ENCODE measurements at regions of chr19 and their contacts with region 1.

Region 1: GRCh38 chr19:4638828-4639530 is at the start of gene TNFAIP8L1:
- DNase-seq: peak; percentile 96
- H3K4me3 Mint-ChIP-seq: peak within 1 kb of the TSS; percentile 100
- H3K27ac Mint-ChIP-seq: peak within 1 kb of the TSS; percentile 98
- H3K4me1 Mint-ChIP-seq: peaks cover 27% of the 10 kb centered on the region
- H3K27me3 Mint-ChIP-seq: no peaks in the 10 kb centered on the region
- total RNA-seq, gene TNFAIP8L1: 16.1 and 16.9 TPM in 2 replicates

Region 2: GRCh38 chr19:4557971-4558941 is 80.7 kb before region 1 on chr19:
- intact Hi-C with region 1: loop called (anchors 5 kb)
- DNase-seq: no peak
- H3K4me3 Mint-ChIP-seq: no peak overlapping the region
- H3K27ac Mint-ChIP-seq: no peak overlapping the region
- H3K4me1 Mint-ChIP-seq: no peaks in the 10 kb centered on the region
- H3K27me3 Mint-ChIP-seq: no peaks in the 10 kb centered on the region

Region 3: GRCh38 chr19:4576016-4576933 is 62.7 kb before region 1 on chr19:
- intact Hi-C with region 1: loop called (anchors 1 kb)
- DNase-seq: peak; percentile 43
- H3K4me3 Mint-ChIP-seq: no peak overlapping the region
- H3K27ac Mint-ChIP-seq: no peak overlapping the region
- H3K4me1 Mint-ChIP-seq: no peaks in the 10 kb centered on the region
- H3K27me3 Mint-ChIP-seq: peaks cover 34% of the 10 kb centered on the region

Region 4: DNA sequence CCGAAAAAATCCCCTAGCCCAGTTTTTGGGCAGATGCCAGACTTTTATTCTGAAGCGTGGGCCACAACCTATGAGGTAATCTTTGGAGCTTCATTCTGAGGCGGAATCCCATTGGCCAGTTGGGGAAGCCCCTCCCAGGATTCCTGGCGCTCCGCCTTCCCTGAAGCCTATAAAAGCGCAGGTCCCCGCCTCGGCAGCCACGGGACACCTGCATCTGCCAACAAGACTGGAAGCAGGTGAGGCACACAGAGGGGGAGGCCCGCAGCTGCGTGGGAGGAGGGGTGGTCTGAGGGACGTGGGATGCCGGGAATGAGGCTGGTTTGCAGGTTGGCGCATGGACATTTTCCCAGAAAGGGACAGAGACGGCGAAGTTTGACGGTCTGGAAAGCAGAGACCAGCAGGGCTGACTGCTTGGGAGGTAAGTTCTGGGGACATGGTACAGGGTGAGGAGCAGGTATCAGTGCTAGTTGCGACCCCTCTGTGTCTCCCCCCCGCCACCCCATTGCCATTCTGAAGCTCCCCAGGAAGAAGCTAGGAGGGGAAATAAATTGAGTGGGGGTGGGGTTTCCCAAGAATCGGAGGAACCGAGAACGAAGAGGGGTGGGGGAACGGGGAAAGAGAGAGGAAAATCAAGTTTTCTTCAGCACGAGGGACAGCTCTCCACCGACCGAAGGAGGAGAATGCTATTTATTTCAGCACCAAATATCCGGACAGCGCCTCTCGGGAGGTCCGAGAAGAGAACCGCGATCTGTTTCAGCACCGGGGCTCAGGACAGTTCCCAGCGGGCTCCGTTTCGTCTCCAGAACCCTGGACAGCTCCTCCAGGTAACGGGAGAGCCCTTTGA is 130.2 kb after region 1 on chr19:
- intact Hi-C with region 1: no loop called
- DNase-seq: peak; percentile 77
- H3K4me3 Mint-ChIP-seq: no peak overlapping the region
- H3K27ac Mint-ChIP-seq: no peak overlapping the region
- H3K4me1 Mint-ChIP-seq: no peaks in the 10 kb centered on the region
- H3K27me3 Mint-ChIP-seq: peaks cover 2% of the 10 kb centered on the region